HepG2 (cell line): ENCODE measurements at regions of chr19 and their contacts with region 1.

Region 1: GRCh38 chr19:17794731-17795536 is at the start of gene B3GNT3:
- DNase-seq: peak; percentile 46
- ATAC-seq: peak; percentile 17
- H3K4me3 ChIP-seq: peak within 1 kb of the TSS; percentile 64 to 79 (median 66)
- H3K27ac ChIP-seq: no peak within 1 kb of the TSS
- H3K4me1 ChIP-seq: peaks cover 55% of the 10 kb centered on the region
- H3K27me3 ChIP-seq: peaks cover 0 to 15% of the 10 kb centered on the region in 2 experiments; a peak in 1 of 5 replicates
- CTCF ChIP-seq: no peak
- EP300 ChIP-seq: no peak
- POLR2A ChIP-seq: no peak; a peak in 1 of 4 replicates
- RAD21 ChIP-seq: no peak
- total RNA-seq, gene B3GNT3: 0.48 and 0.86 TPM in 2 replicates

Region 2: GRCh38 chr19:17687857-17688784 is 106.8 kb before region 1 on chr19 and contains the start of gene UNC13A:
- CTCF ChIA-PET with region 1: no interaction called
- POLR2A ChIA-PET with region 1: no interaction called
- in situ Hi-C with region 1: no loop called
- intact Hi-C with region 1: no loop called
- DNase-seq: no peak
- ATAC-seq: peak; percentile 86
- H3K4me3 ChIP-seq: no peak within 1 kb of the TSS; a peak in 1 of 6 replicates
- H3K27ac ChIP-seq: no peak within 1 kb of the TSS
- H3K4me1 ChIP-seq: no peaks in the 10 kb centered on the region
- H3K27me3 ChIP-seq: peaks cover 0 to 18% of the 10 kb centered on the region in 2 experiments; a peak in 4 of 5 replicates
- CTCF ChIP-seq: no peak
- EP300 ChIP-seq: no peak
- POLR2A ChIP-seq: no peak
- RAD21 ChIP-seq: no peak
- total RNA-seq, gene UNC13A: 0.07 and 0.11 TPM in 2 replicates

Region 3: DNA sequence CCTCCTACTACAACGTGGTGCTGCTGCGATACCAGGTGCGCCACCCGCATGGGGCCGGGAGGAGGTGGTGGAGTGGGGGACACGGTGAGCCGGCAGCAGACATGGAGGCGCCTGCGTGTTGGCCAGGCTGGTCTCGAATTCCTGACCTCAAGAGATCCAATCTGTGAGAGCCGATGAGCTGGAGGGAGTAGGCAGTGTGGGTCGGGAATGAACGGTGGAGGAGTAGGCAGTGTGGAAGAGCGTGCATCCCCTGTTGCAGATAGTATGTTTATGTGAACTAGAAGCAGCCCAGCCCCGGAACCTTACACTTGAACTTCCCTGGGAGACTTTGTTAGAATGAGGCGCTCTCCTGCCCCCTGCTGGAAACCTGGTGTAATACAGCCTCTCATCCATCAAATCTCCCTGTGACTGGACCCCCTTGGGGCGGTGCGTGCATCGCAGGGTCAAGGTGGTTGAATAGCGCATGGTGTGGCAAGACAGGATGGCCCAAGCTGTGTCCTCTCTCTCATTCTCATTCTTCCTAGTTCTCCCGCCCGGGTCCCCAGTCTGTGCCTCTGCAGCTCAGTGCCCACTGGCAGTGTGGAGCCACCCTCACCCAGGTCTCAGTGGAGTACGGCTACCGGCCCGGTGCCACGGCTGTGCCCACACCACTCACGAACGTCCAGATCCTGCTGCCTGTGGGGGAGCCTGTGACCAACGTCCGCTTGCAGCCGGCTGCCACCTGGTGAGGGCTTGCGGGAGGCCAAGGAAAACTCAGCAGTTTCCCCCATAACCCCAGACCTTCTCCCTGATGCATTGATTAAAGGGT is 10.5 kb before region 1 on chr19:
- CTCF ChIA-PET with region 1: no interaction called
- POLR2A ChIA-PET with region 1: no interaction called
- in situ Hi-C with region 1: no loop called
- intact Hi-C with region 1: no loop called
- DNase-seq: peak; percentile 49
- ATAC-seq: peak; percentile 31; the same call in 2 of the 3 replicates
- H3K4me3 ChIP-seq: no peak overlapping the region
- H3K27ac ChIP-seq: no peak overlapping the region
- H3K4me1 ChIP-seq: no peaks in the 10 kb centered on the region
- H3K27me3 ChIP-seq: no peaks in the 10 kb centered on the region
- CTCF ChIP-seq: peak; percentile 77
- EP300 ChIP-seq: no peak
- POLR2A ChIP-seq: no peak
- RAD21 ChIP-seq: peak; percentile 56; the same call in 1 of the 2 replicates

Region 4: GRCh38 chr19:17847538-17848366 is 52.8 kb after region 1 on chr19 and contains the start of gene JAK3:
- CTCF ChIA-PET with region 1: no interaction called
- POLR2A ChIA-PET with region 1: interaction called, 9 read pairs
- in situ Hi-C with region 1: loop called (anchors 5 kb)
- intact Hi-C with region 1: no loop called
- DNase-seq: peak; percentile 59
- ATAC-seq: peak; percentile 83
- H3K4me3 ChIP-seq: peak within 1 kb of the TSS; percentile 50 to 64 (median 60)
- H3K27ac ChIP-seq: peak within 1 kb of the TSS; percentile 67
- H3K4me1 ChIP-seq: peaks cover 43% of the 10 kb centered on the region
- H3K27me3 ChIP-seq: no peaks in the 10 kb centered on the region; a peak in 1 of 5 replicates
- CTCF ChIP-seq: peak; percentile 16; the same call in 1 of the 2 replicates
- EP300 ChIP-seq: 0 out of 4 replicates have a peak, but pooled peaks of 1 of the 2 experiments have one; percentile 48
- POLR2A ChIP-seq: peak; percentile 22 to 79; a peak in 3 of 4 replicates
- RAD21 ChIP-seq: no peak
- total RNA-seq, gene JAK3: 2.8 and 3.4 TPM in 2 replicates